T-cell (primary cell): ENCODE measurements at regions of chr22 and their contacts with region 1.

Region 1: GRCh38 chr22:41780746-41781505 is 19.6 kb upstream of the CCDC134 start:
- DNase-seq: peak; percentile 66 to 100 (median 96)
- ATAC-seq: peak; percentile 96 to 97 (median 96)
- H3K4me3 ChIP-seq: peak overlapping the region; percentile 61 to 78
- H3K4me3 Mint-ChIP-seq: peak overlapping the region; percentile 84 to 90 (median 84)
- H3K27ac ChIP-seq: peak overlapping the region; percentile 95
- H3K27ac Mint-ChIP-seq: peak overlapping the region; percentile 100
- H3K4me1 ChIP-seq: peaks cover 27 to 47% of the 10 kb centered on the region in 2 experiments
- H3K4me1 Mint-ChIP-seq: peaks cover 49 to 58% (median 56%) of the 10 kb centered on the region in 3 donors
- H3K27me3 ChIP-seq: peaks cover 0 to 6% of the 10 kb centered on the region in 2 experiments
- H3K27me3 Mint-ChIP-seq: no peaks in the 10 kb centered on the region

Region 2: GRCh38 chr22:41688365-41689211 is 92.3 kb before region 1 on chr22 and contains the start of gene SNU13:
- CTCF ChIA-PET with region 1: no interaction called
- POLR2A ChIA-PET with region 1: interaction called in 1 of 2 experiments, 13 read pairs
- DNase-seq: peak; percentile 85 to 97 (median 91)
- ATAC-seq: peak; percentile 95 to 98 (median 98)
- H3K4me3 ChIP-seq: peak within 1 kb of the TSS; percentile 99 to 100
- H3K4me3 Mint-ChIP-seq: peak within 1 kb of the TSS; percentile 91 to 97 (median 96)
- H3K27ac ChIP-seq: peak within 1 kb of the TSS; percentile 99
- H3K27ac Mint-ChIP-seq: peak within 1 kb of the TSS; percentile 94 to 98
- H3K4me1 ChIP-seq: peaks cover 9 to 36% of the 10 kb centered on the region in 2 experiments
- H3K4me1 Mint-ChIP-seq: peaks cover 34 to 42% (median 39%) of the 10 kb centered on the region in 3 donors
- H3K27me3 ChIP-seq: no peaks in the 10 kb centered on the region
- H3K27me3 Mint-ChIP-seq: no peaks in the 10 kb centered on the region
- total RNA-seq, gene SNU13: 108 to 145 (median 122) TPM

Region 3: DNA sequence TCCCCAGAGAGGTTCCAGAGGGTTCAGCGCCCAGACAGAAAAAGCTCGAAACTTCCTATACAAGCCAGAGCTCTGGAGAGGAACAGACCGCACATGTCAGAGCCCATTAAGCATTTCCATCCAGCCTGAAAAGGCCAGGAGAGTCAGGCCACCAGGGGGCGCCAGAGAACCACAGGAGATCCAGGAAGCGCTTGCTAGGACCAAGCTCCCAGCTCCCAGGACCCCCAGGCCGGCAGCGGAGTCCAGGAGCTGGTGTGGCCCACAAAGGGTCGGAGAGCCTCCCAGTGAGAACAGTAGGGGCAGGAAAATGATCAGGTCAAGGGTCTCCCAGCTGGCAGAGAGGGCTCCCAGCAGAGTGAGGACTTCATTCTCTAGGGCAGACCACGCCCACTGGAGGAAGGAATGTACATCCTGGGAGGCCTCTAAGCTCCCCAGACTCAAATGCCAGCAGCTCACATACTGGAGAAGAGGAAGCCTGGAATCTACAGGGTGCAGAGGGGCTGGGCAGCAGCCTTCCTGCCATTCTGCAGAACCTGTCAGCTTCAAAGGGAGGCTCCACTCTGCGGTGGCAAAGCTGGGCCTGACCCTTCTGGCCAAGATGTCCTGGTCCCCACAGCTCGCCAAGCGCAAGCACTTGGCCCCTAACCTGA is 83.7 kb before region 1 on chr22:
- CTCF ChIA-PET with region 1: interaction called in 1 of 2 experiments, 15 read pairs
- POLR2A ChIA-PET with region 1: no interaction called
- DNase-seq: peak; percentile 59 to 95 (median 86)
- ATAC-seq: peak; percentile 67 to 76 (median 74)
- H3K4me3 ChIP-seq: peak overlapping the region; percentile 18 to 29
- H3K4me3 Mint-ChIP-seq: peak overlapping the region; percentile 23 to 70 (median 64)
- H3K27ac ChIP-seq: peak overlapping the region; percentile 35
- H3K27ac Mint-ChIP-seq: peak overlapping the region; percentile 77 to 80
- H3K4me1 ChIP-seq: peaks cover 2 to 19% of the 10 kb centered on the region in 2 experiments
- H3K4me1 Mint-ChIP-seq: peaks cover 11 to 14% (median 13%) of the 10 kb centered on the region in 3 donors
- H3K27me3 ChIP-seq: no peaks in the 10 kb centered on the region
- H3K27me3 Mint-ChIP-seq: peaks cover 0 to 1% of the 10 kb centered on the region in 2 donors

Region 4: GRCh38 chr22:41746567-41747400 is 34.1 kb before region 1 on chr22:
- CTCF ChIA-PET with region 1: interaction called, 5 to 17 read pairs
- POLR2A ChIA-PET with region 1: interaction called in 1 of 2 experiments, 5 read pairs
- DNase-seq: peak; percentile 4 to 78 (median 33)
- ATAC-seq: peak; percentile 82 to 94 (median 84)
- H3K4me3 ChIP-seq: no peak overlapping the region
- H3K4me3 Mint-ChIP-seq: no peak overlapping the region
- H3K27ac ChIP-seq: no peak overlapping the region
- H3K27ac Mint-ChIP-seq: no peak overlapping the region
- H3K4me1 ChIP-seq: peaks cover 0 to 4% of the 10 kb centered on the region in 2 experiments
- H3K4me1 Mint-ChIP-seq: peaks cover 0 to 5% (median 3%) of the 10 kb centered on the region in 3 donors
- H3K27me3 ChIP-seq: peaks cover 0 to 11% of the 10 kb centered on the region in 2 experiments
- H3K27me3 Mint-ChIP-seq: peaks cover 3 to 11% of the 10 kb centered on the region in 2 donors

Region 5: GRCh38 chr22:41800348-41801146 is 19.6 kb after region 1 on chr22 and contains the start of gene CCDC134:
- CTCF ChIA-PET with region 1: interaction called, 7 to 46 read pairs
- POLR2A ChIA-PET with region 1: interaction called, 19 to 81 read pairs
- DNase-seq: peak; percentile 83 to 94 (median 89)
- ATAC-seq: peak; percentile 97 to 99 (median 98)
- H3K4me3 ChIP-seq: peak within 1 kb of the TSS; percentile 92 to 96
- H3K4me3 Mint-ChIP-seq: peak within 1 kb of the TSS; percentile 93 to 97 (median 96)
- H3K27ac ChIP-seq: peak within 1 kb of the TSS; percentile 92
- H3K27ac Mint-ChIP-seq: peak within 1 kb of the TSS; percentile 98 to 99
- H3K4me1 ChIP-seq: peaks cover 13 to 36% of the 10 kb centered on the region in 2 experiments
- H3K4me1 Mint-ChIP-seq: peaks cover 38 to 52% (median 48%) of the 10 kb centered on the region in 3 donors
- H3K27me3 ChIP-seq: no peaks in the 10 kb centered on the region
- H3K27me3 Mint-ChIP-seq: no peaks in the 10 kb centered on the region
- total RNA-seq, gene CCDC134: 14.4 to 21.7 (median 16.7) TPM

Region 6: GRCh38 chr22:41998361-41999275 is 217.7 kb after region 1 on chr22 and contains the start of gene WBP2NL:
- CTCF ChIA-PET with region 1: no interaction called
- POLR2A ChIA-PET with region 1: interaction called in 1 of 2 experiments, 11 read pairs
- DNase-seq: peak; percentile 66 to 93 (median 84)
- ATAC-seq: peak; percentile 95 to 96 (median 96)
- H3K4me3 ChIP-seq: peak within 1 kb of the TSS; percentile 67 to 74
- H3K4me3 Mint-ChIP-seq: peak within 1 kb of the TSS; percentile 89 to 98 (median 92)
- H3K27ac ChIP-seq: peak within 1 kb of the TSS; percentile 62
- H3K27ac Mint-ChIP-seq: peak within 1 kb of the TSS; percentile 95
- H3K4me1 ChIP-seq: peaks cover 2 to 23% of the 10 kb centered on the region in 2 experiments
- H3K4me1 Mint-ChIP-seq: peaks cover 23 to 25% (median 23%) of the 10 kb centered on the region in 3 donors
- H3K27me3 ChIP-seq: peaks cover 0 to 13% of the 10 kb centered on the region in 2 experiments
- H3K27me3 Mint-ChIP-seq: no peaks in the 10 kb centered on the region
- total RNA-seq, gene WBP2NL: 1.5 to 2.8 (median 2.2) TPM